ENCODE measurements at regions of chr9 and their contacts with region 1.

Region 1: DNA sequence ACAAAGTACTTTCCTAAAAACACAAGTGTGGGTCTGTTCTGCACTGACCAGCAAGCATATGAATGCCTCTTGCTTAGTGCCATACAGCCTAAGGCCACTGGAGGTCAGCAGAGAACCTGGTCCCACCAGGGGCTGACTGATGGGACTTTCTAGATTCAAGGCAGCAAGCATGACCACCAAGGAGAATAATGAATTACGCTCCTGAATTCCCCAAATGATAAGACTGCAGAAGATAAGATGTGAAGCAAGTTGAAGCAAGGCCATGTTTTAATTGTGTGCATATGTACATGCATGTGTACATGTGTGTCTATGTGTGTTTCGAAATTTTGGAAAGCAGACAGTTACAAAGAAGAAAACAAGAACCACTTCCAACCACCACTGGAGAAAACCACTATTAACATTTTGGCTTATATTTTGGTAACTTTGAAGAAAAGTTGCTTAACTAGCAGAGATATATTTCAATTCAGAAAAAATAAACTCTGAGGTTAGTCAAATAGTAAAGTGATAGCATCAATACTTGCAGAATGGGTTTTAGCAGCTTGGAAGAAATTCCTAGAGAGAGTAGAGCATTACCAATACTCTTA is 70.5 kb downstream of the ERP44 start:
- DNase-seq: no peak
- ATAC-seq: peak; percentile 93

Region 2: DNA sequence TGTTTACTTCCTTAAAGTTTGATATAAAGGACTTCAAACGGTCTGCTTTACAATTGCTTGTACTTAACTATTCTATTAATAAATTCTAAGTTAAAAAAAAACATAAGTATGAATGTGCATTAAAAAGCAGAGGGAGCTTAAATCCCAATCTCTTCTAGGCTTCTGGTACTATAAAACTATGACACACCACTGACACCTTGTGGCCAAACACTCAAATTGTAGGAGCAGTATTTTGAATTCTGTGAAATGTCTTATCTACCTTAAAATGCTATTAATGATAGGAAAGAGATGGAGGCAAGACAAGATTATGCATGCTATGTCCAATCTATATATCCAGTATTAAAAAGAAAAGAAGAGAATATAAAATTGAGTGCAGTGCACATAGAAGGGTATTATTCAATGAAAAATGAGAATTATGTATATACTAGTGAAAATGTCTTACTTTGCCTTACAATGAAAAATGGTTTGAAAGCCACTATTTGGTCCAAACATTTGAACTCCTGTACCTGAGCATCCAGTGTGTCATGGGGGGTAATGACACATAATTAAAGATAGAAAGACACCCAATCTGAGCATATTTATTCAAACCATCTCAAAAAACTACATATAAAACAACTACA is 17.1 kb before region 1 on chr9:
- intact Hi-C with region 1: no loop called
- DNase-seq: no peak
- ATAC-seq: no peak

Region 3: GRCh38 chr9:100222674-100223073 is 194.4 kb after region 1 on chr9:
- intact Hi-C with region 1: loop called (anchors 5 kb)
- DNase-seq: no peak
- ATAC-seq: no peak

Region 4: DNA sequence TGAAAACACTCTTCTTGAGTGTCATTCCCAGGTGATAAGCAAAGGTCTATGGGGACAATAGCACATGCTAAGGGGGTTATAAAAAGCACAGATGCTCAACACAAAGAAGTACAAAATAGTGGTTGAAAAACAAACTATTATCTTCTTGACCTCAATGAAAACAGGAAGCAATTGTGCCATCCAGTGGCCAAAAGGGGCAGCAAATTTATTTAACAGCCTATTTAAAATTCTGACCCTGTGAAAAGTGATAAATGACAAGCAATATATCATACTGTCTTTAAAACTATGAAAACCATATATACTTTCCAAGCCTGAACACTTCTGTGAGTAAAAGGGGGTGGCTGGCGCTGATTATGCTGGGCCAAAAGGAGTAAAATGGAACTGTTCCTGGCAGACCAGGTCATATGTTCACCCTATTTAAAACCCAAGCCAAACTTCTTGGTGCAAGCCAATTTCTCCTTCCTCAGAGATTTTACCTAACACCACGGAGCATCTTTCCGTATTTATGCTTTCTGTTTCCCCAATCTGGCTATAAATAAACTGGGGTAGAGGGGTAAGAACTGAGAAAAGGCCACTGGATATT is 294.8 kb after region 1 on chr9:
- intact Hi-C with region 1: loop called (anchors 5 kb)
- DNase-seq: no peak
- ATAC-seq: no peak

Measured in Right ventricle myocardium inferior (tissue), 1 donor.